IMR-90 (cell line): ENCODE measurements at regions of chr5 and their contacts with region 1.

Region 1: GRCh38 chr5:171336521-171337209 is 27.6 kb downstream of the TLX3 start:
- DNase-seq: peak; percentile 64
- ATAC-seq: peak; percentile 97
- H3K4me3 ChIP-seq: peak overlapping the region; percentile 52
- H3K27ac ChIP-seq: no peak overlapping the region
- H3K4me1 ChIP-seq: no peaks in the 10 kb centered on the region
- H3K27me3 ChIP-seq: peaks cover 22% of the 10 kb centered on the region
- CTCF ChIP-seq: peak; percentile 80
- POLR2A ChIP-seq: 0 out of 2 replicates have a peak, but pooled peaks have one; percentile 23
- RAD21 ChIP-seq: peak; percentile 88

Region 2: DNA sequence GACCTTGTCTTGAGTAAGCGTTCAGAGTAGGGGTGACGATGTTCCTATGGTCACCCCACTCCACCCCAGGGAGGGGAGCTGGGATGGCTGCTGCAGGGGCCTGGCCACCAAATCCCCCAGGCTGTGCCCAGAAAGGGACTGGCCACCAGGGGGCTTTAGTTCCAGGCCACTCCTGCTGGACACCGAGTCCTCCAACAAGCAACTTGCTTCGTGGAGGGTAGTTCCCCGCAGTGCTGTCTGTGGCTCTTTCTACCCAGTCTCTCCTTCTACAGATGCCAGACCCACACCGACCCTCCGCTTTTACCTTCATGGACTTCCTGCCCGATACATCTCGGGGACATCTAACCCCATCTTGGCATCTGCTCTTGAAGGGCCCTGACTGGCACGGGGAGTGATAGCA is 588.8 kb before region 1 on chr5:
- CTCF ChIA-PET with region 1: interaction called, 5 read pairs
- POLR2A ChIA-PET with region 1: no interaction called
- dilution Hi-C with region 1: no loop called
- in situ Hi-C with region 1: loop called (anchors 5 kb)
- intact Hi-C with region 1: loop called (anchors 2 kb)
- DNase-seq: no peak
- ATAC-seq: no peak
- H3K4me3 ChIP-seq: no peak overlapping the region
- H3K27ac ChIP-seq: no peak overlapping the region
- H3K4me1 ChIP-seq: peaks cover 2% of the 10 kb centered on the region; the same call in 1 of the 2 replicates
- H3K27me3 ChIP-seq: peaks cover 35% of the 10 kb centered on the region
- CTCF ChIP-seq: peak; percentile 34
- POLR2A ChIP-seq: no peak
- RAD21 ChIP-seq: peak; percentile 29; the same call in 1 of the 2 replicates

Region 3: DNA sequence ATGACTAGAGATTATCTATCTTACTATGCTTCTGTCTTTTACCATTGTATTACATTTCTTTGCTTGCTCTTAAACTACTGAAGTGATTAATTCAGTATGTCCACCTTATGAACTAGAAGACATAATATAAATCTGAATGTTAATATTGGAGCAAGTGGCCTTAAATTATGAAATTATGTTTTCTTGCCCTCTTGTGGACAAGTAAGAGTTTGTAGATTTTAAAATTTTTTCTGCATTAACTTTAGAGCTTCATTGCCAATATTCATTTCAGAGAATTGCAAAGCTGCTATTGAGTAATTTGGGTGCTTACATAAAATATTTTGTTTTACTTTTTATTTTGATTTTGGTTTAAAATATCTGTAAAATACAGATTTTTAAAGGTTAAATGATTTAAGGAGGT is 419.6 kb before region 1 on chr5:
- CTCF ChIA-PET with region 1: no interaction called
- POLR2A ChIA-PET with region 1: no interaction called
- dilution Hi-C with region 1: no loop called
- in situ Hi-C with region 1: no loop called
- intact Hi-C with region 1: loop called (anchors 2 kb)
- DNase-seq: no peak
- ATAC-seq: no peak
- H3K4me3 ChIP-seq: no peak overlapping the region
- H3K27ac ChIP-seq: no peak overlapping the region
- H3K4me1 ChIP-seq: peaks cover 6% of the 10 kb centered on the region
- H3K27me3 ChIP-seq: no peaks in the 10 kb centered on the region
- CTCF ChIP-seq: peak; percentile 42
- POLR2A ChIP-seq: no peak
- RAD21 ChIP-seq: peak; percentile 23

Region 4: DNA sequence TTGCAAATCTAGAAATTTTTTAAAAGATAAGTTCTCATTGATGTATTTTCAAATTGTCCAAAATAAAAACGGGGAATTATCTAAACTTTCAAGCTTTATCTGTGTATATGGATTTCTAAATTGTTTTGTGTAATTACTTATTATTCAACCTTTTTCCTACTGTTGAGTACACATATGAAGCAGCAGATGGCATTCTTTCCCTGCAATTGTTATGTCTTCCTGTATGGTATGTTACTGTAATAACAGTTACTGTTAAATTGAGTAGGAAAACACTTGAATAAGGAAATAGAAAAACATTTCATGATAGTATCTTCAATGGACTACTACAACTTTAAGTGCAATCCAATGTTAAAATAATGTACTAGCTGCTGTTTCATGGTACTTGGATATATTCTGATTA is 350.1 kb before region 1 on chr5:
- CTCF ChIA-PET with region 1: no interaction called
- POLR2A ChIA-PET with region 1: no interaction called
- dilution Hi-C with region 1: no loop called
- in situ Hi-C with region 1: loop called (anchors 25 kb)
- intact Hi-C with region 1: loop called (anchors 2 kb)
- DNase-seq: peak; percentile 42
- ATAC-seq: peak; percentile 51; the same call in 1 of the 2 replicates
- H3K4me3 ChIP-seq: no peak overlapping the region
- H3K27ac ChIP-seq: no peak overlapping the region
- H3K4me1 ChIP-seq: no peaks in the 10 kb centered on the region
- H3K27me3 ChIP-seq: no peaks in the 10 kb centered on the region
- CTCF ChIP-seq: peak; percentile 45
- POLR2A ChIP-seq: no peak
- RAD21 ChIP-seq: peak; percentile 51

Region 5: GRCh38 chr5:171207256-171207847 is 129.3 kb before region 1 on chr5:
- CTCF ChIA-PET with region 1: interaction called, 22 read pairs
- POLR2A ChIA-PET with region 1: no interaction called
- dilution Hi-C with region 1: no loop called
- in situ Hi-C with region 1: loop called (anchors 5 kb)
- intact Hi-C with region 1: loop called (anchors 1 kb)
- DNase-seq: peak; percentile 57
- ATAC-seq: peak; percentile 79
- H3K4me3 ChIP-seq: no peak overlapping the region
- H3K27ac ChIP-seq: no peak overlapping the region
- H3K4me1 ChIP-seq: no peaks in the 10 kb centered on the region
- H3K27me3 ChIP-seq: no peaks in the 10 kb centered on the region
- CTCF ChIP-seq: peak; percentile 64
- POLR2A ChIP-seq: no peak
- RAD21 ChIP-seq: peak; percentile 65

Region 6: DNA sequence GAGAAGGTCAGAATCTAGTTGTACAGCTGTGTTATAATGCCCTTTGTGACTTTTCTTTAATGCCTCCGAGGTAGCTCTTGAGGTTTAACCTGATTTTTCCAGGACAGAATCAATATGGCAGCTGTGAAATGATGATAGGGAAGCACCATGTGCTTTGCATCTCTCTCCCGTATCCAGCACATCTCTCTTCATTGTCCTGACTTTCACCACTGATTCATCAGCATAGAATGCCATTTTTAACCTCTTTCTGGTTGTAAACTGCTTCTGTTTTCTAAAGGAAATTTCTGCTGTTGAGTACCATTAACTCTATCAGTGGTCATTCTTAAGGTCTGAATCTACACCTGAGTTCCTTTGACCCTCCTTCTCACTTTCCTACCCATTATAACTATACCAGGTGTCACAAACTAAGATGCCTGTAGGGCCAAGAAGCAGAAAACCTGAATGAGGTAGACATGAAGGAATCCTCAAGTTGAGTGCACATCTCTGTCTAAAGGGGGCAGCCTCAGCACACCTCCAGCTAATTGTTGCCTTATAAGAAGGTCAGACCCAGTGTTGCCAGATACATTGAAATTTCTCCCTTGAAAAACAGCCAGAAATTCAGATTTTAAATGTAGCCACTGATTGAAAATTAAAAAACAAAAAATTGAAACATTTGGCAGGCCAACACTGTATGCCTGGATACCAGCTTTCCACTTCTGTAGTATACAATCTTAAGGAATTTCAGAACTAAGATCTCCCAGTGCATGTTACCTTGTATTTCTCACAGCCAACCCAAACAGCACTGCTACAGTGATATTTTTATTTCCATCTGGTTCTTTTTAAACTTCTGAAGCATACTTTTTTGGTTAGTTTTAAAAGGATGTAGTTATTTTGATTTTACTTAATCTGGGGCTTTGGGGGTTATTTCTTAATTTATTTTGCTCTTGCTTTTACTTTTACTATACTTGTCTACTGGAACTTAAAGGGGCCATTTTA is 63.4 kb before region 1 on chr5:
- CTCF ChIA-PET with region 1: interaction called, 3 read pairs
- POLR2A ChIA-PET with region 1: no interaction called
- dilution Hi-C with region 1: no loop called
- in situ Hi-C with region 1: no loop called
- intact Hi-C with region 1: loop called (anchors 2 kb)
- DNase-seq: peak; percentile 40
- ATAC-seq: peak; percentile 15; the same call in 1 of the 2 replicates
- H3K4me3 ChIP-seq: no peak overlapping the region
- H3K27ac ChIP-seq: no peak overlapping the region
- H3K4me1 ChIP-seq: peaks cover 12% of the 10 kb centered on the region
- H3K27me3 ChIP-seq: no peaks in the 10 kb centered on the region
- CTCF ChIP-seq: peak; percentile 50
- POLR2A ChIP-seq: no peak
- RAD21 ChIP-seq: peak; percentile 49

Region 7: GRCh38 chr5:171323806-171324633 is 12.6 kb before region 1 on chr5:
- CTCF ChIA-PET with region 1: interaction called, 10 read pairs
- POLR2A ChIA-PET with region 1: no interaction called
- dilution Hi-C with region 1: no loop called
- in situ Hi-C with region 1: no loop called
- intact Hi-C with region 1: no loop called
- DNase-seq: no peak
- ATAC-seq: no peak
- H3K4me3 ChIP-seq: no peak overlapping the region
- H3K27ac ChIP-seq: no peak overlapping the region
- H3K4me1 ChIP-seq: no peaks in the 10 kb centered on the region
- H3K27me3 ChIP-seq: peaks cover 61% of the 10 kb centered on the region
- CTCF ChIP-seq: no peak
- POLR2A ChIP-seq: no peak
- RAD21 ChIP-seq: no peak